ENCODE measurements at regions of chr5 and their contacts with region 1.

Region 1: GRCh38 chr5:79284846-79285245 is 48.9 kb downstream of the JMY start:
- DNase-seq: no peak
- ATAC-seq: no peak
- H3K4me3 ChIP-seq: no peak overlapping the region
- H3K4me3 Mint-ChIP-seq: no peak overlapping the region
- H3K27ac ChIP-seq: no peak overlapping the region
- H3K27ac Mint-ChIP-seq: no peak overlapping the region
- H3K4me1 ChIP-seq: peaks cover 0 to 6% of the 10 kb centered on the region in 2 experiments
- H3K4me1 Mint-ChIP-seq: peaks cover 16 to 33% (median 16%) of the 10 kb centered on the region in 3 donors
- H3K27me3 ChIP-seq: no peaks in the 10 kb centered on the region
- H3K27me3 Mint-ChIP-seq: no peaks in the 10 kb centered on the region

Region 2: GRCh38 chr5:79086116-79086515 is 198.7 kb before region 1 on chr5:
- CTCF ChIA-PET with region 1: no interaction called
- POLR2A ChIA-PET with region 1: no interaction called
- DNase-seq: no peak
- ATAC-seq: no peak
- H3K4me3 ChIP-seq: no peak overlapping the region
- H3K4me3 Mint-ChIP-seq: no peak overlapping the region
- H3K27ac ChIP-seq: no peak overlapping the region
- H3K27ac Mint-ChIP-seq: no peak overlapping the region
- H3K4me1 ChIP-seq: no peaks in the 10 kb centered on the region
- H3K4me1 Mint-ChIP-seq: no peaks in the 10 kb centered on the region
- H3K27me3 ChIP-seq: no peaks in the 10 kb centered on the region
- H3K27me3 Mint-ChIP-seq: no peaks in the 10 kb centered on the region

Region 3: GRCh38 chr5:79241535-79241979 is 43.3 kb before region 1 on chr5:
- CTCF ChIA-PET with region 1: no interaction called
- POLR2A ChIA-PET with region 1: interaction called, 4 to 11 read pairs
- DNase-seq: no peak
- ATAC-seq: no peak
- H3K4me3 ChIP-seq: no peak overlapping the region
- H3K4me3 Mint-ChIP-seq: peak overlapping the region; percentile 49 to 96 (median 55)
- H3K27ac ChIP-seq: no peak overlapping the region
- H3K27ac Mint-ChIP-seq: no peak overlapping the region
- H3K4me1 ChIP-seq: peaks cover 24 to 40% of the 10 kb centered on the region in 2 experiments
- H3K4me1 Mint-ChIP-seq: peaks cover 76 to 85% (median 79%) of the 10 kb centered on the region in 3 donors
- H3K27me3 ChIP-seq: no peaks in the 10 kb centered on the region
- H3K27me3 Mint-ChIP-seq: no peaks in the 10 kb centered on the region

Region 4: GRCh38 chr5:79297661-79298060 is 12.8 kb after region 1 on chr5:
- CTCF ChIA-PET with region 1: interaction called in 1 of 2 experiments, 10 read pairs
- POLR2A ChIA-PET with region 1: interaction called in 1 of 2 experiments, 9 read pairs
- DNase-seq: no peak
- ATAC-seq: no peak
- H3K4me3 ChIP-seq: no peak overlapping the region
- H3K4me3 Mint-ChIP-seq: no peak overlapping the region
- H3K27ac ChIP-seq: no peak overlapping the region
- H3K27ac Mint-ChIP-seq: no peak overlapping the region
- H3K4me1 ChIP-seq: no peaks in the 10 kb centered on the region
- H3K4me1 Mint-ChIP-seq: peaks cover 0 to 5% (median 0%) of the 10 kb centered on the region in 3 donors
- H3K27me3 ChIP-seq: no peaks in the 10 kb centered on the region
- H3K27me3 Mint-ChIP-seq: no peaks in the 10 kb centered on the region

Region 5: GRCh38 chr5:79448336-79448735 is 163.5 kb after region 1 on chr5:
- CTCF ChIA-PET with region 1: no interaction called
- POLR2A ChIA-PET with region 1: no interaction called
- DNase-seq: no peak
- ATAC-seq: no peak
- H3K4me3 ChIP-seq: no peak overlapping the region
- H3K4me3 Mint-ChIP-seq: no peak overlapping the region
- H3K27ac ChIP-seq: no peak overlapping the region
- H3K27ac Mint-ChIP-seq: no peak overlapping the region
- H3K4me1 ChIP-seq: no peaks in the 10 kb centered on the region
- H3K4me1 Mint-ChIP-seq: no peaks in the 10 kb centered on the region
- H3K27me3 ChIP-seq: no peaks in the 10 kb centered on the region
- H3K27me3 Mint-ChIP-seq: no peaks in the 10 kb centered on the region

Measured in T-cell (primary cell).